ENCODE measurements at regions of chr16 and their contacts with region 1.

Region 1: GRCh38 chr16:50548125-50548908 is at the start of gene NKD1:
- DNase-seq: peak; percentile 60 to 85 (median 71)
- ATAC-seq: peak; percentile 86
- H3K4me3 ChIP-seq: peak within 1 kb of the TSS; percentile 67
- H3K4me3 Mint-ChIP-seq: peak within 1 kb of the TSS; percentile 85 to 95 (median 88)
- H3K27ac ChIP-seq: peak within 1 kb of the TSS; percentile 72
- H3K27ac Mint-ChIP-seq: peak within 1 kb of the TSS; percentile 72 to 97 (median 91)
- H3K4me1 ChIP-seq: peaks cover 9 to 26% of the 10 kb centered on the region in 2 donors
- H3K4me1 Mint-ChIP-seq: peaks cover 14 to 63% (median 43%) of the 10 kb centered on the region in 7 donors
- H3K27me3 ChIP-seq: no peaks in the 10 kb centered on the region
- H3K27me3 Mint-ChIP-seq: peaks cover 0 to 76% (median 0%) of the 10 kb centered on the region in 5 donors
- total RNA-seq, gene NKD1: 1.4 to 7.9 (median 6.2) TPM

Region 2: GRCh38 chr16:50065624-50066481 is 482.5 kb before region 1 on chr16 and contains the start of gene HEATR3:
- CTCF ChIA-PET with region 1: no interaction called
- POLR2A ChIA-PET with region 1: no interaction called
- intact Hi-C with region 1: loop called in 1 of 2 experiments (anchors 1 kb)
- DNase-seq: peak; percentile 86 to 96 (median 90)
- ATAC-seq: peak; percentile 93
- H3K4me3 ChIP-seq: peak within 1 kb of the TSS; percentile 91
- H3K4me3 Mint-ChIP-seq: peak within 1 kb of the TSS; percentile 80 to 97 (median 92)
- H3K27ac ChIP-seq: peak within 1 kb of the TSS; percentile 81
- H3K27ac Mint-ChIP-seq: peak within 1 kb of the TSS; percentile 55 to 96 (median 93)
- H3K4me1 ChIP-seq: peaks cover 17 to 18% of the 10 kb centered on the region in 2 donors
- H3K4me1 Mint-ChIP-seq: peaks cover 34 to 49% (median 44%) of the 10 kb centered on the region in 7 donors
- H3K27me3 ChIP-seq: no peaks in the 10 kb centered on the region
- H3K27me3 Mint-ChIP-seq: no peaks in the 10 kb centered on the region
- total RNA-seq, gene HEATR3: 12.5 to 27.5 (median 23.5) TPM

Region 3: GRCh38 chr16:50266337-50267091 is 281.8 kb before region 1 on chr16 and contains the start of gene ADCY7:
- CTCF ChIA-PET with region 1: no interaction called
- POLR2A ChIA-PET with region 1: no interaction called
- intact Hi-C with region 1: loop called (anchors 5 kb)
- DNase-seq: peak; percentile 57 to 84 (median 77)
- ATAC-seq: peak; percentile 90
- H3K4me3 ChIP-seq: peak within 1 kb of the TSS; percentile 87
- H3K4me3 Mint-ChIP-seq: peak within 1 kb of the TSS; percentile 83 to 98 (median 96)
- H3K27ac ChIP-seq: peak within 1 kb of the TSS; percentile 85
- H3K27ac Mint-ChIP-seq: peak within 1 kb of the TSS; percentile 77 to 99 (median 97)
- H3K4me1 ChIP-seq: peaks cover 41 to 46% of the 10 kb centered on the region in 2 donors
- H3K4me1 Mint-ChIP-seq: peaks cover 56 to 76% (median 60%) of the 10 kb centered on the region in 7 donors
- H3K27me3 ChIP-seq: no peaks in the 10 kb centered on the region
- H3K27me3 Mint-ChIP-seq: no peaks in the 10 kb centered on the region
- total RNA-seq, gene ADCY7: 179 to 326 (median 208) TPM

Region 4: DNA sequence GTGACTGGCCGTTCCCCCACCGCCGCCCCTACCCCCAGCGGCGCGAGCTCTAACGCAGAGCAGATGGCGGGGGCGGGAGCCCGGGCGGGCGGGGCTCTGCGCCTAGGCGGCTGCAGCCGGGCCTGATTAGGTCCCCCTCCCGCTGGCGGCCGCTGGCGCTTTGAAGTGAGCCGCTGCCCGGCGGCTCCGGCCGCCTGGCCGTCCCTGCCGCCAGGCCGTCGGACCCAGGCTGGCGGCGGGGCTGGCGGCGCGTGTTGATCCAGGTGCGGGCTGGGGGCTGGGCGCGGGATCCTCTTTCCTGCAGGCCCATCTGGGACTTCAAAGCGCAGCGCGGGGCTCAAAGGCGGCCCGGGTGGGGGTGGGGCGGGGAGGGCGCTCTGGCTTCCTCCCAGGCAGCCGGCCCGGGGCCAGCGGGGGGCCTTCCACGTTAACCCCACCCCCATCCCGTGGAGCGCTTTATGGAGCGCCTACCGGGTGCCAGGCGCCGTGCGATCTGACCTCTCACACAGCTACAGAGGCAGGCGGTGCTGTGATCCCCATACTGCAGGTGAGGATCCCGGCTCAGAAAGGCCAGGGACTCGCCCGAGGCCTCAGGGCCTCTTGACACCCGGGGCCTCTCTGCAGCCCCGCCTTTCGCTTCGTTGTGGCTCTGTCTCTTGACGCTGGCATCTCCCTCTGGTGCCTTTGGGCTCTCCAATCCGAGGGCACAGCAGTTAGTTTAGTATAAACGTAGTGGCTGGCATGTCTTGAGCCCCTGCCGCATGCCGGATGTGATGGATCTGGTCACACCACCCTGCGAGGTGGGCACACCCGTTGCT is 80.2 kb before region 1 on chr16:
- CTCF ChIA-PET with region 1: no interaction called
- POLR2A ChIA-PET with region 1: no interaction called
- intact Hi-C with region 1: loop called in 1 of 2 experiments (anchors 5 kb)
- DNase-seq: peak in 4 of 9 donors; percentile 7 to 20 (median 12)
- ATAC-seq: peak; percentile 12
- H3K4me3 ChIP-seq: no peak overlapping the region
- H3K4me3 Mint-ChIP-seq: peak overlapping the region; percentile 25 to 88 (median 72)
- H3K27ac ChIP-seq: no peak overlapping the region
- H3K27ac Mint-ChIP-seq: peak overlapping the region in 2 of 9 donors; percentile 26 to 41
- H3K4me1 ChIP-seq: no peaks in the 10 kb centered on the region
- H3K4me1 Mint-ChIP-seq: peaks cover 0 to 19% (median 14%) of the 10 kb centered on the region in 7 donors
- H3K27me3 ChIP-seq: no peaks in the 10 kb centered on the region
- H3K27me3 Mint-ChIP-seq: peaks cover 7 to 61% (median 11%) of the 10 kb centered on the region in 5 donors

Region 5: DNA sequence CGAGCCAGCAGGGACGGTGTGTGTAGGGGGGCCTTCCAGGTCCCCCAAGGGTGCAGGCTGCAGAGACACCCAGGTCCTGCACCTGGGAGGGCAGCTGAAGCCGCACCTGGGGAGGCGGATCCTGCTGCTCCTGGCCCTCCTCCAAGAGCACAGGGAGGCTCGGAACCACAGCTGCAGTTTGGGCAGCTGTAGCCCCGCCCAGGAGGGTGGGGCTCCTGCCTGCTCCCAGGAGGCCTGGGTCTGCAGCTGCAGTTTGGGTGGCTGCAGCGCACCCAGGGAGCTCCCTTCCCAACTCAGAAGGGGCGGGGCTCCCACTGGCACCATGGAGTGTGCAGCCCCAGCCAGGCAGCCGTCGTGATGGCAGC is 69.6 kb before region 1 on chr16:
- CTCF ChIA-PET with region 1: no interaction called
- POLR2A ChIA-PET with region 1: no interaction called
- intact Hi-C with region 1: no loop called
- DNase-seq: no peak
- ATAC-seq: no peak
- H3K4me3 ChIP-seq: no peak overlapping the region
- H3K4me3 Mint-ChIP-seq: no peak overlapping the region
- H3K27ac ChIP-seq: no peak overlapping the region
- H3K27ac Mint-ChIP-seq: no peak overlapping the region
- H3K4me1 ChIP-seq: no peaks in the 10 kb centered on the region
- H3K4me1 Mint-ChIP-seq: peaks cover 0 to 7% (median 4%) of the 10 kb centered on the region in 7 donors
- H3K27me3 ChIP-seq: no peaks in the 10 kb centered on the region
- H3K27me3 Mint-ChIP-seq: peaks cover 0 to 5% (median 0%) of the 10 kb centered on the region in 5 donors

Region 6: DNA sequence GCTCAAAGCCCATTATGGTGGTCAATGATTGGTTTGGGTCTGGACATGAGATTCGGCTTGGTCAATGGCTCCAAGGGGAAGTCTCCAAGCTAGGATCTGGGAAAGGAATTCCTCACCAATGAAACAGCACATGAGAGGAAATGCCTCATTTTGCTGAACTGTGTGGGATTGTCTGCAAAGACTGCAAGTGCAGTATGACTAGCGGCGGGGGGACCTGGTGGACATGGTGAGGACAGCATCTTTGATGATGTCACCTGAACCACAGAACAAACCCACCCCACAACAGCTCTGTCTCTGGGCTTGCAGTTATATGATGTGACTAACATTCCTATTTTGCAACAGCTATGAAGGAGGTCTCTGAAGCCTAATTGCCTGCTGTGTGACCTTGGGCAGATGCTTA is 50.7 kb before region 1 on chr16:
- CTCF ChIA-PET with region 1: no interaction called
- POLR2A ChIA-PET with region 1: no interaction called
- intact Hi-C with region 1: no loop called
- DNase-seq: no peak
- ATAC-seq: no peak
- H3K4me3 ChIP-seq: no peak overlapping the region
- H3K4me3 Mint-ChIP-seq: no peak overlapping the region
- H3K27ac ChIP-seq: no peak overlapping the region
- H3K27ac Mint-ChIP-seq: no peak overlapping the region
- H3K4me1 ChIP-seq: no peaks in the 10 kb centered on the region
- H3K4me1 Mint-ChIP-seq: peaks cover 0 to 5% (median 0%) of the 10 kb centered on the region in 7 donors
- H3K27me3 ChIP-seq: no peaks in the 10 kb centered on the region
- H3K27me3 Mint-ChIP-seq: no peaks in the 10 kb centered on the region

Region 7: GRCh38 chr16:50603206-50604064 is 55.1 kb after region 1 on chr16:
- CTCF ChIA-PET with region 1: no interaction called
- POLR2A ChIA-PET with region 1: no interaction called
- intact Hi-C with region 1: loop called in 1 of 2 experiments (anchors 2 kb)
- DNase-seq: no peak
- ATAC-seq: no peak
- H3K4me3 ChIP-seq: no peak overlapping the region
- H3K4me3 Mint-ChIP-seq: peak overlapping the region in 8 of 10 donors; percentile 49 to 79 (median 68)
- H3K27ac ChIP-seq: peak overlapping the region; percentile 43
- H3K27ac Mint-ChIP-seq: peak overlapping the region in 8 of 9 donors; percentile 78 to 96 (median 82)
- H3K4me1 ChIP-seq: peaks cover 13 to 35% of the 10 kb centered on the region in 2 donors
- H3K4me1 Mint-ChIP-seq: peaks cover 14 to 59% (median 47%) of the 10 kb centered on the region in 7 donors
- H3K27me3 ChIP-seq: no peaks in the 10 kb centered on the region
- H3K27me3 Mint-ChIP-seq: no peaks in the 10 kb centered on the region

Region 8: DNA sequence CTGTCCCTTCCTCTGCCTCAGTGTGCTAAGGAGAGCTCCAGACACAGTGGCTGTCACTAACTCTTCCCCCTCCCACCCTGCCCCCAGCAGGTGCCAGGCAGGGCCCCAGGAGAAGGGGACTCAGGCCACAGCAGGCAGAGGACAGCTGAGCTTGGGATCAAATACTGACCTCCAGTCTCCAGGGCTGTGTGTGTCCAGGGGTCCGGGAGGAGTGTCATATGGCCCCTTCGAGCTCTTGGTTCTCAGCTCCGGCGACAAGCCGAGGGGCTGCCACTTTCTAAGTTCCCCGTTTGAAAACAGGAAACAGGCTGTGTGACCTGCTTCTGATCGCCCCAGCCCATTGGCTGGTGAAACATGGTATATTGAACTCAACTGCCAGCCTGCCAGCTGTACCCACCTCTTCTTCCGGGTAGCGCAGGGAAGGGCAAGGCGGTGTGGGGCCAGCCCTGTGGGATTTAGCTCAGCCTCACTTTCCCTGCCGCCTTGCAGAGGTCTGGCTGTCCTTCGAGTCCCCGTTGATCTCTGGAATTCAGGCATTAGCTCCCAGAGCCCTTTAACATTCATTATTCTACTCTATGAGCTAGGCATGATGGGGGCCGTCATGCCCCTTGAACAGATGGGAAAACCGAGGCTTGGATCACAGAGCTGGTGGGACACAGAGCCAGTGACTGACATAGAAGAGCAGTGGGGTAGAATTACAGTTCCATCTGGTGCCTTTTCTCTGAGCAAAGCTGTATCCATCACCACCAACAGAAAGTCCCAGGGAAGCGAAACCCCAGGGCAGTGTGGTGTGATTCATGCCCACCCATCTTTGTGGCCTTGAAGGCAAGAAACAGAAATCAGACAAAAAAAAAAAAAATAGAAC is 132.9 kb after region 1 on chr16 and contains the start of gene SNX20:
- CTCF ChIA-PET with region 1: no interaction called
- POLR2A ChIA-PET with region 1: interaction called, 3 read pairs
- intact Hi-C with region 1: loop called (anchors 1 to 5 kb)
- DNase-seq: peak in 8 of 9 donors; percentile 40 to 80 (median 75)
- ATAC-seq: peak; percentile 77
- H3K4me3 ChIP-seq: peak within 1 kb of the TSS; percentile 85
- H3K4me3 Mint-ChIP-seq: peak within 1 kb of the TSS; percentile 83 to 98 (median 93)
- H3K27ac ChIP-seq: peak within 1 kb of the TSS; percentile 90
- H3K27ac Mint-ChIP-seq: peak within 1 kb of the TSS; percentile 89 to 99 (median 97)
- H3K4me1 ChIP-seq: peaks cover 80 to 81% of the 10 kb centered on the region in 2 donors
- H3K4me1 Mint-ChIP-seq: peaks cover 68 to 94% (median 89%) of the 10 kb centered on the region in 7 donors
- H3K27me3 ChIP-seq: no peaks in the 10 kb centered on the region
- H3K27me3 Mint-ChIP-seq: no peaks in the 10 kb centered on the region
- total RNA-seq, gene SNX20: 32.4 to 94.9 (median 70.8) TPM

Region 9: GRCh38 chr16:50806099-50807062 is 258.1 kb after region 1 on chr16:
- CTCF ChIA-PET with region 1: no interaction called
- POLR2A ChIA-PET with region 1: no interaction called
- intact Hi-C with region 1: loop called (anchors 1 to 2 kb)
- DNase-seq: peak; percentile 66 to 92 (median 89)
- ATAC-seq: peak; percentile 98
- H3K4me3 ChIP-seq: peak overlapping the region; percentile 34
- H3K4me3 Mint-ChIP-seq: peak overlapping the region; percentile 12 to 90 (median 80)
- H3K27ac ChIP-seq: no peak overlapping the region
- H3K27ac Mint-ChIP-seq: peak overlapping the region; percentile 15 to 92 (median 81)
- H3K4me1 ChIP-seq: peaks cover 3 to 5% of the 10 kb centered on the region in 2 donors
- H3K4me1 Mint-ChIP-seq: peaks cover 8 to 19% (median 13%) of the 10 kb centered on the region in 7 donors
- H3K27me3 ChIP-seq: no peaks in the 10 kb centered on the region
- H3K27me3 Mint-ChIP-seq: no peaks in the 10 kb centered on the region